ENCODE measurements at regions of chr1 and their contacts with region 1.

Region 1: DNA sequence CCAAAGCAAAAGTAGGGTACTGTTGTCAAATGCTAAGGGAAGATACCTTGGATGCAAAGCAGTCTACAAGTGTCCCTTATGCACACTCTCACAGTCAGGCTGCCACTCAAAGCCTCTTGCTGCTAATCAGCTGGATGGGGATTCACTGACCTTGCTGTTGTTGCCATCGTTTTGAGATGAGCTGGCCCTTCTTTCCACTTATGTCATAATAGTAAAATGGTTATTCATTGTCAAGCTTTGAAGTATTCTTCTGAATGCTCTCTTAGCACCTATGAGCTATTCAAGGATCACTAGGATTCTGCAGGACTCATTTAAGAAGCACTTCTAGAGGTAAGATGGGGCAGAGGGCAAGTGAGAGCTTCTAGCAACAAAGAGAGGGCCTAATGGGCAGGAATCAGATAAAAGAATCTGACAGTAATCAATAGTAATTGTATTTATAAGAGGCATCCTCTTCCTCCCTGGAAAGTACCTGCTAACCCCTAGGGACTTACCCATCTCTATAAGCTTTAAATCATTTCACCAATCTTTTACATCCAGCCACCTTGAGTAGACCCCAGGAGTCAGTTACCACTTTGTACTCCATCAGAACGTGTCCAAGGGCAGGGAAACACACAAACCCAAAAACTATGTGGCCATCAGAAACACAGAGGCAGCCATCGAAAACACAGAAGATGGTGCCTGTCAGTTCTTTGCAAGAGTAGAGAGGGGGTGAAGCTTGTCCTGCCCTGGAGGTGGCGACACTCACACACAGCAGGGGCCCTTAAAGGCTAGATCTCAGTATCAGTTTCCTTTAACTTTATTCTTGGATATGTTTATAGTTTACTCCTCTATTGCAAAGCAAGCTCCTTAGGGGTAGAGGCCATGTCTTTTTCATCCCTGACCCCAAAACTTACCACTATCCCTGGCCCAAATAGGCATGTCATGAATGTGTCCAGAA is 103.7 kb upstream of the NFIA start:
- DNase-seq: peak; percentile 38
- H3K4me3 ChIP-seq: no peak overlapping the region
- H3K27ac ChIP-seq: no peak overlapping the region
- H3K4me1 ChIP-seq: peaks cover 4% of the 10 kb centered on the region
- H3K27me3 ChIP-seq: no peaks in the 10 kb centered on the region
- CTCF ChIP-seq: peak; percentile 89 to 90

Region 2: GRCh38 chr1:61210435-61211154 is 231.9 kb after region 1 on chr1:
- CTCF ChIA-PET with region 1: no interaction called
- dilution Hi-C with region 1: no loop called
- in situ Hi-C with region 1: no loop called
- intact Hi-C with region 1: loop called (anchors 10 kb)
- DNase-seq: no peak
- H3K4me3 ChIP-seq: no peak overlapping the region
- H3K27ac ChIP-seq: no peak overlapping the region
- H3K4me1 ChIP-seq: no peaks in the 10 kb centered on the region
- H3K27me3 ChIP-seq: no peaks in the 10 kb centered on the region
- CTCF ChIP-seq: peak in 1 of 2 donors; percentile 29

Region 3: GRCh38 chr1:61659061-61659460 is 680.4 kb after region 1 on chr1:
- CTCF ChIA-PET with region 1: no interaction called
- dilution Hi-C with region 1: no loop called
- in situ Hi-C with region 1: no loop called
- intact Hi-C with region 1: loop called (anchors 1 kb)
- DNase-seq: no peak
- H3K4me3 ChIP-seq: no peak overlapping the region
- H3K27ac ChIP-seq: no peak overlapping the region
- H3K4me1 ChIP-seq: no peaks in the 10 kb centered on the region
- H3K27me3 ChIP-seq: no peaks in the 10 kb centered on the region
- CTCF ChIP-seq: peak; percentile 28 to 55

Region 4: GRCh38 chr1:61851849-61852669 is 873.4 kb after region 1 on chr1:
- CTCF ChIA-PET with region 1: no interaction called
- dilution Hi-C with region 1: no loop called
- in situ Hi-C with region 1: no loop called
- intact Hi-C with region 1: loop called (anchors 2 kb)
- DNase-seq: peak; percentile 31
- H3K4me3 ChIP-seq: no peak overlapping the region
- H3K27ac ChIP-seq: no peak overlapping the region
- H3K4me1 ChIP-seq: no peaks in the 10 kb centered on the region
- H3K27me3 ChIP-seq: no peaks in the 10 kb centered on the region
- CTCF ChIP-seq: peak; percentile 68 to 78

Measured in mammary epithelial cell (primary cell).